ENCODE measurements at regions of chr12 and their contacts with region 1.

Region 1: DNA sequence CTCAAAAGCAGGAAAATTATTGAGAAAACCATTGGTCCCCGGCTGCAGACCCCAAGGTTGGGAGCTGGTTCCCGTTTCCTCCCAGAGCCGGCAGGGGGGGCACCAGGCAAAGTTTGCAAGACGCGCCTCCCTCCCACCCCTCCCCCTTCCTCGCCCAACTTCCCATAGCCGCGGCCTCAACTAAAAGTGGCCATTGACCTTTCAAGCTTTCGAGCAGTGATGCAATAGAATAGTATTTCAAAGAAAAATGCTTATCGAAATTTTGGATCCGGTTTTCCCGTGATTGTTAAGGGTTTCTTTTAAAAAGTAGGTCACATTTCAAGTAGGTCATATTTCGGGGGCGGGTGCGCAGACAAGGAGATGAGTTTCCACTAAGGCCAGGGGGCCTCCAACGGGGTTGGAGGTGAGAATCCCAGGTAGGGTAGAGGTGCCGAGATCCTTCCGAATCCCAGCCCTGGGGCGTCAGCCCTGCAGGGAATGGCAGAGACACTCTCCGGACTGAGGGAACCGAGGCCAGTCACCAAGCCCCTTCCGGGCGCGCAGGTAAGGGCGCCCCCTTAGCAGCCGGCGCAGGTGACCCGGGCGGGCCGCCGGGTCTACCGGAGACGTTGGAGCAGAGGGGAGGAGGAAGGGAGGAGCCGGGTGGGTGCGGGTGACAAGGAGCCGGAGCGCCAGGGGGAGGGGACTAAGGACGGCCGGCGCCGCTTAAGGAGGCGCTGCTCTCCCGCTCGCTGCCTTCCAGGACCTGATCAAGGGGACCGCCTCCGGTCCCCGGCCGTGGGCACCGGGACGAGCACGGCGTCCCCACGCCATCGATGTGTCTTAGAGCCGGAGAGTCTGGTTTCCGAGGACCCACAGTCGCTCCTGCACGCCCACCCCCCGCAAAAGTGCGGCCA is 2.6 kb upstream of the SOCS2 start:
- DNase-seq: peak; percentile 78 to 94
- H3K4me3 ChIP-seq: peak overlapping the region; percentile 73 to 77
- H3K27ac ChIP-seq: peak overlapping the region; percentile 45 to 86
- H3K4me1 ChIP-seq: peaks cover 0 to 29% (median 18%) of the 10 kb centered on the region in 4 donors
- H3K27me3 ChIP-seq: peaks cover 0 to 24% of the 10 kb centered on the region in 2 donors
- CTCF ChIP-seq: peak; percentile 80 to 84

Region 2: GRCh38 chr12:93514853-93515252 is 55.1 kb before region 1 on chr12:
- intact Hi-C with region 1: loop called (anchors 10 kb)
- DNase-seq: no peak
- H3K4me3 ChIP-seq: no peak overlapping the region
- H3K27ac ChIP-seq: no peak overlapping the region
- H3K4me1 ChIP-seq: no peaks in the 10 kb centered on the region
- H3K27me3 ChIP-seq: no peaks in the 10 kb centered on the region
- CTCF ChIP-seq: no peak

Region 3: GRCh38 chr12:93742110-93742934 is 172.4 kb after region 1 on chr12:
- intact Hi-C with region 1: loop called (anchors 5 kb)
- DNase-seq: peak; percentile 76 to 82
- H3K4me3 ChIP-seq: peak overlapping the region; percentile 63 to 70
- H3K27ac ChIP-seq: peak overlapping the region; percentile 80 to 85
- H3K4me1 ChIP-seq: peaks cover 0 to 50% (median 14%) of the 10 kb centered on the region in 4 donors
- H3K27me3 ChIP-seq: no peaks in the 10 kb centered on the region
- CTCF ChIP-seq: peak; percentile 16 to 43

Region 4: DNA sequence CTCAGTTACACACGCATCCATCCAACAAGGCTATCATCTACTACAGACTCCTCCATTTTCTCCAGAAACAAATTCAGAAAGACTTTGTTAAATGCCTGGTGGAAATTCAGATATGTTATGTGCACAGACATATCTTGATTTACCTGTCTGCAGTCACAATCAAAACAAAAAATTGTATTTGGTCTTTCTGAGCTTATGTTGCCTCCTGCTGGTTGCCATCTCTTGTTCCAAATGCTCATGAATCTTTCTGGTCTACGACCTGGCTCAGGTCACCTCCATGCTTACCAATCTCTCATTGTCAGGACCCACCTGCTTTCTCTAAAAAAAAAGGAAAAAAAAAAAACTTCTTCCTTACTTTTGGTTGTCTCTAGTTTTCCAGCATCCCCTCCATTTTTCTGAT is 409.3 kb after region 1 on chr12:
- intact Hi-C with region 1: loop called (anchors 10 kb)
- DNase-seq: no peak
- H3K4me3 ChIP-seq: no peak overlapping the region
- H3K27ac ChIP-seq: no peak overlapping the region
- H3K4me1 ChIP-seq: peaks cover 0 to 9% (median 0%) of the 10 kb centered on the region in 4 donors
- H3K27me3 ChIP-seq: no peaks in the 10 kb centered on the region
- CTCF ChIP-seq: peak in 1 of 2 experiments; percentile 31

Region 5: GRCh38 chr12:94101738-94102660 is 532.1 kb after region 1 on chr12:
- intact Hi-C with region 1: loop called (anchors 5 kb)
- DNase-seq: peak; percentile 90 to 92
- H3K4me3 ChIP-seq: peak overlapping the region; percentile 54 to 73
- H3K27ac ChIP-seq: peak overlapping the region; percentile 38 to 39
- H3K4me1 ChIP-seq: peaks cover 0 to 12% (median 4%) of the 10 kb centered on the region in 4 donors
- H3K27me3 ChIP-seq: peaks cover 0 to 18% of the 10 kb centered on the region in 2 donors
- CTCF ChIP-seq: peak; percentile 79 to 83